H1 (cell line): ENCODE measurements at regions of chr7 and their contacts with region 1.

Region 1: GRCh38 chr7:157397731-157398691 is 61.2 kb downstream of the DNAJB6 start:
- DNase-seq: no peak
- H3K4me3 ChIP-seq: no peak overlapping the region
- H3K27ac ChIP-seq: no peak overlapping the region
- H3K4me1 ChIP-seq: peaks cover 0 to 3% (median 3%) of the 10 kb centered on the region in 4 experiments; a peak in 3 of 7 replicates
- H3K27me3 ChIP-seq: no peaks in the 10 kb centered on the region
- CTCF ChIP-seq: peak in 2 of 3 experiments; percentile 55 to 73; a peak in 3 of 4 replicates
- EP300 ChIP-seq: no peak
- POLR2A ChIP-seq: no peak
- RAD21 ChIP-seq: peak; percentile 26 to 34; a peak in 2 of 4 replicates

Region 2: DNA sequence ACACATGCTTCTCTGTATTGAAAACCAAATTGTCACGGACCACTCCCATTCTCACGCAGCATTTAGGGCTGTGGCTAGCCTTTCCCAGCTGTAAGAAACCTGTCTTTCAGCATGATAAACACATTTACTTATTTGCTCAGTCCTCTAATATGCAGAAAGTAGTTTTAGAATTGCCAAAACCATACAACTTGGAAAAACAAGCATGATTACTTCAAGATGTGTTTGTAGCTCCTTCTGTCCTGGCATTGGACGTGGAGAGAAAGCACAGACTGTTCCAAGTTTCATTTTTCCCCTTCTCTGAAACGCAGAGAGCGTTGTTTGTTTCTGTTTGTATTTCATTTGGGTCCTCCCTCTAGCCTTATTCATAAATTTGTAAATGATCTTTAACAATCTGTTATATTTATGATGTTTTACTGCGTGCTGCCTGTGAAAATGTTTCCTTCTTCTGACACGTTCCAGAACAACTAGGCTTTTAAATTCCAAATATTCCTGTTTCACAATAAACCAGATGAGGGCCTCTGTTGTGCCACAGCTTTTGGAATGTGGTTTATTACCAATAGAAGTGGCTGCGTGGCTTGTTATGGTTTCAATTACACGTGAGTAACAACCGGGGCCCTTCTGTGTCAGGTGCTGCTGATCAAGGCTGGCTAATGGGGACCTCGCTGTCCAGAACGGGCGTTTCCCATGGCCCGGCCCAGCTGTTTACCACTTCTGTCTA is 413.7 kb before region 1 on chr7:
- CTCF ChIA-PET with region 1: no interaction called
- POLR2A ChIA-PET with region 1: no interaction called
- DNase-seq: peak in 1 of 2 experiments; percentile 30
- H3K4me3 ChIP-seq: no peak overlapping the region
- H3K27ac ChIP-seq: no peak overlapping the region
- H3K4me1 ChIP-seq: no peaks in the 10 kb centered on the region
- H3K27me3 ChIP-seq: no peaks in the 10 kb centered on the region
- CTCF ChIP-seq: no peak
- EP300 ChIP-seq: no peak
- POLR2A ChIP-seq: no peak
- RAD21 ChIP-seq: no peak

Region 3: GRCh38 chr7:157380416-157380815 is 17.6 kb before region 1 on chr7:
- CTCF ChIA-PET with region 1: interaction called, 28 read pairs
- POLR2A ChIA-PET with region 1: interaction called, 4 read pairs
- DNase-seq: no peak
- H3K4me3 ChIP-seq: no peak overlapping the region
- H3K27ac ChIP-seq: no peak overlapping the region
- H3K4me1 ChIP-seq: peaks cover 0 to 5% (median 0%) of the 10 kb centered on the region in 4 experiments; a peak in 4 of 7 replicates
- H3K27me3 ChIP-seq: no peaks in the 10 kb centered on the region
- CTCF ChIP-seq: no peak
- EP300 ChIP-seq: no peak
- POLR2A ChIP-seq: no peak
- RAD21 ChIP-seq: no peak

Region 4: GRCh38 chr7:157386979-157387800 is 10.8 kb before region 1 on chr7:
- CTCF ChIA-PET with region 1: interaction called, 28 read pairs
- POLR2A ChIA-PET with region 1: interaction called, 3 read pairs
- DNase-seq: peak; percentile 67 to 93
- H3K4me3 ChIP-seq: no peak overlapping the region
- H3K27ac ChIP-seq: peak overlapping the region; percentile 16; the same call in 1 of the 2 replicates
- H3K4me1 ChIP-seq: peaks cover 0 to 5% (median 3%) of the 10 kb centered on the region in 4 experiments; a peak in 5 of 7 replicates
- H3K27me3 ChIP-seq: no peaks in the 10 kb centered on the region
- CTCF ChIP-seq: peak; percentile 80 to 93 (median 90)
- EP300 ChIP-seq: no peak
- POLR2A ChIP-seq: peak; percentile 17 to 42; a peak in 2 of 3 replicates
- RAD21 ChIP-seq: peak; percentile 56 to 63

Region 5: GRCh38 chr7:157495594-157495993 is 97.6 kb after region 1 on chr7:
- CTCF ChIA-PET with region 1: no interaction called
- POLR2A ChIA-PET with region 1: no interaction called
- DNase-seq: no peak
- H3K4me3 ChIP-seq: no peak overlapping the region
- H3K27ac ChIP-seq: no peak overlapping the region
- H3K4me1 ChIP-seq: peaks cover 0 to 1% (median 0%) of the 10 kb centered on the region in 4 experiments; a peak in 1 of 7 replicates
- H3K27me3 ChIP-seq: peaks cover 0 to 16% (median 9%) of the 10 kb centered on the region in 4 experiments; a peak in 5 of 7 replicates
- CTCF ChIP-seq: no peak
- EP300 ChIP-seq: no peak
- POLR2A ChIP-seq: no peak
- RAD21 ChIP-seq: no peak